Cardiac septum (tissue), 1 donor: ENCODE measurements at regions of chr15 and their contacts with region 1.

Region 1: DNA sequence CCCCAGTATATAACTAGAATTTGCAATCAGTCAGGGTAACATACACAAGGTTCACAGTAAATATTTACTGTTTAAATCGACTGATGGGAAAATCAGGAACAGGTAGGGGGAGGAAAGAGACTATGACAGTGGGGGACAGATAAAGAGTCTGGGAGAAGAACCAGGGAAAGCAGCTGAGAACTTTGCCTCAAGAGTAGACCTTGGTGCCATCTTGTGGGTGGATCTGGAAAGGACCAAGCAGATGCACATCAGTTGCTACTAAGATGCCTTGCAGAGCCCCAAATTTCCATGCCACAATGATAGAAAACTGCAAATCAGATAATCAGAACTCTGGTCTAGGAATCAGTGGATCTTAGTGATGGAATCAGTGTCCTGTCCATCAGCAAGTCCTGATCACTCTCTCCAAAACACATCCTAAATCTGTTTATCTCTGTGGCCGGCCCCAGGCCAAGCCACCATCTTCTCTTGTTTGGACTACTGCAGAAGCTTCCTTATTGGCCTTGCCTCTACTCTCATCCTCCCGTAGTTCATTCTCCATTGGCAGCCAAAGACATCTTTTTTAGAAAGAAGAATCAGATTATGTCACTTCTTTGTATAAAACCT is 62.7 kb downstream of the PDE8A start:
- DNase-seq: no peak

Region 2: GRCh38 chr15:84955089-84955848 is 89.1 kb before region 1 on chr15:
- intact Hi-C with region 1: loop called (anchors 2 kb)
- DNase-seq: no peak

Region 3: GRCh38 chr15:85005319-85005718 is 39.0 kb before region 1 on chr15:
- intact Hi-C with region 1: loop called (anchors 5 kb)
- DNase-seq: no peak

Region 4: DNA sequence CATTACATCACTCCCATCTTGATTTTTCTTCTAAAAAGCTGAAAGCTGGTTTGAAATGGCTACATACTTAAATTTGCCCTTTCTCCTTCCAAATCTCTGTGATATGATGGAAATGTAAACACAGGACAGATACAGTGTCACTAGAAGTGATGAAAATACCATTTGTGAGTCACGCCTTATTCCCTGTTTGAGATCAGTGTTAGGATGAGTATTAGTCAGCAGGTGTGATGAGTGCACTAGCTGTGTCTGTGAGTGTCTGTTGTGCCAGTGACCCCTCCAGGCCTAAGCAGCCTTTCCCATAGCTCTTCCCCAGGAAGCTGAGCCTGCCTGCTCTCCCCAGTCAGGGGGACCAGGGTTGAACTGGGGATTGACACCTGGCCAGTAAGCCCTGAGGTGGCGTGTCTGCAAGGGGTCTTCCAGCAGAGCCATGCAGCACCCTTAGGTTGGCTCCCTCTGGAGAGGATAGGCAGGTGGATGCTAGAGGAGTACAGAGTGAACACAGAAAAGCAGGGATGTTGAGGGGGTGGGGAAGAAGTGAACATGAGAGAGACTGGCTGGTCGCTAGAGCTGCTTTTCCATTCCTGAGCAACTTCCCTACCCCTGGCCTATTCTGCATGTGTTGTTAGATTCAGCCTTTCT is 29.3 kb after region 1 on chr15:
- intact Hi-C with region 1: no loop called
- DNase-seq: no peak

Region 5: DNA sequence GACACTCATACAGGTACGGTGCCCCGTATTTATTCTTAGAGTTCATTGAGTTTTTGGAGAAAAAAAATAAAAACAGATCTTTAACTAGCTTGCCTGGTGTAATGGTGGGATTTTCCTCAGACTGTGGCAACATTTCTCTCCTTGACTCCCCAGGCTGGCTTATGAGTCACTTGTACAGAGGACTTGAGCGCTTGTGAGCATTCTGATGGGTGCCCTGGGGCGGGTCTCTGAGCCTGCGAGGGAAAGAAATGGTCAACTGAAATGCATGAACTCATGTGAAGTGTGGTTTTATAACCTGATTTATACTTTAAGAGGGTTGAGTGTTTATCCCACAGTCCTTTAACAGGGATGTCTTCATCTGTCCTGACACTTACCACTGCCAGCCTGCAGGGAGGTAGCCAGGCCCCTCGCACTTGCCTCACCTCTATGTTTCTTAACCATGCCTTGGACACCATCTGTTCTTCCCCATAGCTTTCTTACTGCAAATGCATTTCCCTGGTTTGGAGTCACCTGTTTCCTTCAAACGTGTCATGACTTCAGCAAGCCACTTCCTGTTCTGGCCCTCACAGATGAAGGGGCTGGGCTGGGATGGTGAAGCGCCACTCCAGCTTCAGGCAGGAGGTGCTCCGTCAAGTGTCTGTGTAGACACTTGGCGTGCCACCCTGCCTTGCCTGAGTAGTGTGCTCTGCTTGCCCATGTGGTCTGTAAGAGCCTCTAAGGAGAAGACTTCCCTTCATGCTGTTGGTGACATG is 56.0 kb after region 1 on chr15:
- intact Hi-C with region 1: no loop called
- DNase-seq: no peak